Activated naive CD4-positive, alpha-beta T cell treated with anti-CD3 and anti-CD28 coated beads for 36 hours (primary cell): ENCODE measurements at regions of chr17 and their contacts with region 1.

Region 1: GRCh38 chr17:69388822-69389442 is 25.6 kb upstream of the MAP2K6 start:
- DNase-seq: no peak
- H3K4me3 Mint-ChIP-seq: no peak overlapping the region
- H3K27ac Mint-ChIP-seq: no peak overlapping the region
- H3K4me1 Mint-ChIP-seq: no peaks in the 10 kb centered on the region
- H3K27me3 Mint-ChIP-seq: peaks cover 3% of the 10 kb centered on the region

Region 2: DNA sequence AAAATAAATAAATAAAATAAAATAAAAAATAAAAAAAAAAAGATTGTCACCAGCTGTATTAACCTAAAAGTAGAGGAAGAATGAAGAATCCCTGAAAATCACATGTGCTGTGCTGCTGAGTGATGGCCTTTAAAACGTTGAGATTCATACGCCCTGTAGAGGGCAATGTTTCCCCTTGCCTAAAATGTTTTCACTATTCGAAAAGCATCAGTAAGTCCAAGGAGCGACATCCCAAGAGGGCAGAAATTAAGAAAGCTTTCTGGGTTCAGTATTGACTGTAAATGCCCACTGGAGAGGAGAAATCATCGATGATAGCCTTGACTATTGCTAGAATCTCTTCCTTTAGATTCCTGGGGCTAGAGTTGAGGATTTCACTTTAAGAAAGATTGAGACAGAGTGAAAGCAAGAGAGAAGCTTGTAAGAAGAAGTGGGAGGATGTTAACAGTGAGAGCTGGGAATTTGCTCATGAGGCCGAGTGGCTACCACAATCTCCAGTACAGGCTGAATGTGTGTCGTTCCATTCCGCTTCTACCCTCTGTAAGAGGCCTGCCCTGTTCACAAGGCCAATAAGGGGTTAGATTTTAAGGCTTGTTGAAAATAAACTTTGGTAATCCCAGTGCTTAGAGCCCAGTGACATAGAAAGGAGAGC is 616.9 kb before region 1 on chr17:
- CTCF ChIA-PET with region 1: no interaction called
- intact Hi-C with region 1: loop called (anchors 10 kb)
- DNase-seq: no peak
- H3K4me3 Mint-ChIP-seq: no peak overlapping the region
- H3K27ac Mint-ChIP-seq: no peak overlapping the region
- H3K4me1 Mint-ChIP-seq: peaks cover 2% of the 10 kb centered on the region
- H3K27me3 Mint-ChIP-seq: no peaks in the 10 kb centered on the region

Region 3: GRCh38 chr17:69246726-69247375 is 142.1 kb before region 1 on chr17:
- CTCF ChIA-PET with region 1: interaction called, 4 read pairs
- intact Hi-C with region 1: loop called (anchors 10 kb)
- DNase-seq: no peak
- H3K4me3 Mint-ChIP-seq: no peak overlapping the region
- H3K27ac Mint-ChIP-seq: no peak overlapping the region
- H3K4me1 Mint-ChIP-seq: no peaks in the 10 kb centered on the region
- H3K27me3 Mint-ChIP-seq: no peaks in the 10 kb centered on the region

Region 4: DNA sequence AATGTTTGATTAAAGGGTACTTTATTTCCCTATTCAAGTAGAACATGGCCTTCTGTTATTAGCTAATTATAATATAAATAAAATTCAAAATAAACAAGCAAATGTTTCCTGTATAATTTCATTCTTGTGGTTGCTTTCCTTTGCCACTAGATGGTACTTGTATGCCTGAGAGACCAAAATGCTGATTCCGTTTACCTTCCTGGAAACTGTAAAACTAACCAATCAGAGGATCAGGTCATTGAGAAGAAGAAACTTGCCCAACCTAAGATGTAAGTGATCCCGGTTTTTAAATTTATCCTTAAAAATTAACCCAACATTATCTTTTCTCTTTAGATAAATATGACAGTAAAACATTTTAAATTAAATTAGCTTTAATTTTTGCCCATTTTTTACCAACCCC is 53.9 kb before region 1 on chr17:
- CTCF ChIA-PET with region 1: no interaction called
- intact Hi-C with region 1: loop called (anchors 1 kb)
- DNase-seq: no peak
- H3K4me3 Mint-ChIP-seq: no peak overlapping the region
- H3K27ac Mint-ChIP-seq: no peak overlapping the region
- H3K4me1 Mint-ChIP-seq: peaks cover 5% of the 10 kb centered on the region
- H3K27me3 Mint-ChIP-seq: peaks cover 5% of the 10 kb centered on the region

Region 5: DNA sequence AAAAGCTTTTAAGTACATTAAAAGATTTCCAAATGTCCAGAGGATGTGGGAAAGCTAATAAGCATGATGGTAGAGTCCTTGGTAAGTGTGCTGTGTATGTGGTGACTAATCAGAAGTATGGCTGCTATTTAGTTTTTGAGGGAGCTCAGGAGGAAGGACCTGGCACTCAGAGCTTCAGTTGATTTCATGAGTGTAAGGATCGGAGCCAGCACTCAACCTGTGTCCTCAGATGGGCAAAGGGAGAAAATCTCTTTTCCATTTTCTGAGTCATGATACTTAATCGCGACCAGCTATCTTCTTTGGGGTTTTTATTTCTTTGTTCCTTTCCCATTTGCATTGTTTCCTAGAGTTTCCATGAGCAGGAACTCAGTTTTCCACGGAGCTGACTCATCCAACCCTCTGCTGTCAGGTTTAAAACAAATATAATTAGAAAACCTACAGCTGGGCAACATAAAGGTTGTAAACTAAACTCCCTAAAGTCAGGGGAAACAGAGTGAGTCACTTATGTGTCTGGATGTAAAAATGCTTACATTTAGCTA is 150.9 kb after region 1 on chr17:
- CTCF ChIA-PET with region 1: no interaction called
- intact Hi-C with region 1: no loop called
- DNase-seq: no peak
- H3K4me3 Mint-ChIP-seq: no peak overlapping the region
- H3K27ac Mint-ChIP-seq: no peak overlapping the region
- H3K4me1 Mint-ChIP-seq: peaks cover 5% of the 10 kb centered on the region
- H3K27me3 Mint-ChIP-seq: no peaks in the 10 kb centered on the region